ENCODE measurements at regions of chr10 and their contacts with region 1.

Region 1: GRCh38 chr10:24952707-24953645 is 570 bp upstream of the PRTFDC1 start:
- DNase-seq: peak; percentile 56
- ATAC-seq: peak; percentile 84
- H3K4me3 ChIP-seq: peak overlapping the region in 4 of 5 experiments; percentile 32 to 68 (median 54)
- H3K4me3 Mint-ChIP-seq: peak overlapping the region; percentile 83
- H3K27ac ChIP-seq: no peak overlapping the region
- H3K27ac Mint-ChIP-seq: peak overlapping the region; percentile 22
- H3K4me1 ChIP-seq: peaks cover 7 to 9% of the 10 kb centered on the region in 2 donors
- H3K4me1 Mint-ChIP-seq: peaks cover 13% of the 10 kb centered on the region
- H3K27me3 ChIP-seq: peaks cover 0 to 15% (median 5%) of the 10 kb centered on the region in 4 experiments
- H3K27me3 Mint-ChIP-seq: peaks cover 25% of the 10 kb centered on the region
- CTCF ChIP-seq: peak; percentile 54

Region 2: DNA sequence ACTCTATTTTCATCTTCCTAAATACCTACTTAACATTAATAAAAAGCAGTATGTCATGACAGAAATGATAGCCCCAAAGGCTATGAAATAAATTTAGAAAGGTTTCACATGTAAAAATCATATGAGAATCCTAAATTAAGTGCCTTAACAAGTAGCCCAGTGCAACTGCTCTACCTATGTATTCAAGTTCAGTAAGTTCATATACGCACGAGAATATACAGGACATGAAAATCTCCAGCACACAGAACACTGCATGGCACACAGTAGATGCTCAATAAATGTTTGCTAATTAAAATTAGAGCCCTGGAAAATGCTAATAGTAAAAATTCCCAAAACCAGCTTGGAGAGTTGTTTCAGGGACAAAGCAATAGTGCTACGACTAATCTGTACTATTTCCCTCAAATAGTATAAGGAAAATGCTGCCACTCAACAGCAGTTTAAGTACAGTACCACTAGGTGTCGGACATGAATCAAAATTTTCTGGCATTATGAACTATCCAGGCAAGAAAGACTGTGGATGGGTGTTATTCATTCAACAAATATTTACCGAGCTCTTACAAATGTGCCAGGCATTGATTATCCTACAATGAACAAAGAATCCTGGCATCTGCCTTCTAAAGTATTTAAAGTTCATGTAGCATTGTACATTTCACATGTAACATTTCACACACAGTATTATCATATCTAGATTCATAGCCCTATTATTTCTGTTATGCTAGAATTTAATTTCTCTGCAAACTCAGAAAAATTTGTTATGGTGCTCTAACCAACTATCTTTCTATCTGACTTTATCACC is 310.2 kb before region 1 on chr10:
- CTCF ChIA-PET with region 1: interaction called, 19 read pairs
- POLR2A ChIA-PET with region 1: no interaction called
- intact Hi-C with region 1: no loop called
- DNase-seq: peak; percentile 57
- ATAC-seq: peak; percentile 67
- H3K4me3 ChIP-seq: no peak overlapping the region
- H3K4me3 Mint-ChIP-seq: no peak overlapping the region
- H3K27ac ChIP-seq: no peak overlapping the region
- H3K27ac Mint-ChIP-seq: no peak overlapping the region
- H3K4me1 ChIP-seq: no peaks in the 10 kb centered on the region
- H3K4me1 Mint-ChIP-seq: peaks cover 3% of the 10 kb centered on the region
- H3K27me3 ChIP-seq: no peaks in the 10 kb centered on the region
- H3K27me3 Mint-ChIP-seq: no peaks in the 10 kb centered on the region
- CTCF ChIP-seq: peak; percentile 81

Region 3: GRCh38 chr10:24887855-24888231 is 65.1 kb before region 1 on chr10:
- CTCF ChIA-PET with region 1: no interaction called
- POLR2A ChIA-PET with region 1: no interaction called
- intact Hi-C with region 1: loop called (anchors 5 kb)
- DNase-seq: no peak
- ATAC-seq: peak; percentile 5
- H3K4me3 ChIP-seq: peak overlapping the region in 2 of 5 experiments; percentile 11 to 37
- H3K4me3 Mint-ChIP-seq: peak overlapping the region; percentile 64
- H3K27ac ChIP-seq: peak overlapping the region in 1 of 2 donors; percentile 74
- H3K27ac Mint-ChIP-seq: peak overlapping the region; percentile 60
- H3K4me1 ChIP-seq: peaks cover 20 to 37% of the 10 kb centered on the region in 2 donors
- H3K4me1 Mint-ChIP-seq: peaks cover 44% of the 10 kb centered on the region
- H3K27me3 ChIP-seq: no peaks in the 10 kb centered on the region
- H3K27me3 Mint-ChIP-seq: no peaks in the 10 kb centered on the region
- CTCF ChIP-seq: no peak

Region 4: GRCh38 chr10:24912215-24912614 is 40.8 kb before region 1 on chr10:
- CTCF ChIA-PET with region 1: interaction called, 3 read pairs
- POLR2A ChIA-PET with region 1: no interaction called
- intact Hi-C with region 1: loop called (anchors 5 kb)
- DNase-seq: peak; percentile 24
- ATAC-seq: peak; percentile 33
- H3K4me3 ChIP-seq: no peak overlapping the region
- H3K4me3 Mint-ChIP-seq: peak overlapping the region; percentile 4
- H3K27ac ChIP-seq: no peak overlapping the region
- H3K27ac Mint-ChIP-seq: no peak overlapping the region
- H3K4me1 ChIP-seq: peaks cover 12 to 13% of the 10 kb centered on the region in 2 donors
- H3K4me1 Mint-ChIP-seq: peaks cover 20% of the 10 kb centered on the region
- H3K27me3 ChIP-seq: no peaks in the 10 kb centered on the region
- H3K27me3 Mint-ChIP-seq: no peaks in the 10 kb centered on the region
- CTCF ChIP-seq: no peak

Measured in B cell (primary cell).